ENCODE measurements at regions of chr9 and their contacts with region 1.

Region 1: GRCh38 chr9:124551472-124552272 is 44.5 kb upstream of the NR5A1 start:
- DNase-seq: peak; percentile 70 to 77
- H3K4me3 ChIP-seq: no peak overlapping the region
- H3K4me3 Mint-ChIP-seq: no peak overlapping the region
- H3K27ac Mint-ChIP-seq: no peak overlapping the region
- H3K4me1 ChIP-seq: peaks cover 9% of the 10 kb centered on the region; the same call in 1 of the 2 replicates
- H3K4me1 Mint-ChIP-seq: no peaks in the 10 kb centered on the region
- H3K27me3 ChIP-seq: no peaks in the 10 kb centered on the region
- H3K27me3 Mint-ChIP-seq: no peaks in the 10 kb centered on the region
- CTCF ChIP-seq: peak; percentile 69 to 78

Region 2: GRCh38 chr9:124054582-124055227 is 497.0 kb before region 1 on chr9:
- CTCF ChIA-PET with region 1: no interaction called
- POLR2A ChIA-PET with region 1: no interaction called
- intact Hi-C with region 1: no loop called
- DNase-seq: no peak
- H3K4me3 ChIP-seq: no peak overlapping the region
- H3K4me3 Mint-ChIP-seq: no peak overlapping the region
- H3K27ac Mint-ChIP-seq: no peak overlapping the region
- H3K4me1 ChIP-seq: no peaks in the 10 kb centered on the region
- H3K4me1 Mint-ChIP-seq: no peaks in the 10 kb centered on the region
- H3K27me3 ChIP-seq: no peaks in the 10 kb centered on the region
- H3K27me3 Mint-ChIP-seq: no peaks in the 10 kb centered on the region
- CTCF ChIP-seq: no peak

Region 3: DNA sequence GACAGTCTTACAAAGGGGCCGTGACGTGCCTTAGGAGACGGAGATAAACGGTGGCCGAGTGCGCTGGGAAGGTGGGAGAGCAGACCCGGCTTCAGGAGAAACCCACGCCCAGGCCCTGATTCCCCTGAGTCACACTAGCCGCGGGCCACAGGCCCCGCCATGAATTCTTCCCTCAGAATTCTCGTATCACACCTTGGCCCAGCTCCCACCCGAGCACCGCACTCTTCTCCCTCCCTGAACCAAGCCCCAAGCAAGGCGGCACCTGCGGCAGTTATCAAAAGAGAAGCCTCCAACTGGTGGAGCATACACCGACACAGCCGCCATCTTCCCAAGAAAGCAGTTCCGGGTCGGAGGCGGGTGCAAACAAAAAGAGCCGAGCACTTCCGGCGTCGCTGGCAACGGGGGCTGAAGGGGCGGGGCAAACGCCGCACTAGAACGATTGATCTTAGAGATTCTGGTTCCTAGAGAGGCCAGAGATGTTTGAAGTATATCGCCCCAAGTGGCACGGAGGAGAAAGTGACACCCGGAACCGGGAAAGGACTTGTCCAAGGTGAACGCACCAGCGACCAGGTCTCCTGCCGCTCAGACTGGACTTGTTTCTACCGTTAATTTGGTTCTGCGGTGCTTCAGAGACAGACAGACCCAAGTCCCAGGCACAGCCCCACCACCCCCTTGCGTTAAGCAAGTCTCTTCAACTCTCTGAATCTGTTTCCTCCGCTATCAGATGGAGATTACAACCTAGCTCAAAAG is 136.4 kb before region 1 on chr9 and contains the start of gene PSMB7:
- CTCF ChIA-PET with region 1: no interaction called
- POLR2A ChIA-PET with region 1: no interaction called
- intact Hi-C with region 1: no loop called
- DNase-seq: peak; percentile 96 to 97
- H3K4me3 ChIP-seq: peak within 1 kb of the TSS; percentile 84
- H3K4me3 Mint-ChIP-seq: peak within 1 kb of the TSS; percentile 91
- H3K27ac Mint-ChIP-seq: peak within 1 kb of the TSS; percentile 98
- H3K4me1 ChIP-seq: peaks cover 10% of the 10 kb centered on the region; the same call in 1 of the 2 replicates
- H3K4me1 Mint-ChIP-seq: peaks cover 11% of the 10 kb centered on the region
- H3K27me3 ChIP-seq: no peaks in the 10 kb centered on the region
- H3K27me3 Mint-ChIP-seq: no peaks in the 10 kb centered on the region
- CTCF ChIP-seq: peak; percentile 80 to 86
- total RNA-seq, gene PSMB7: 216 and 238 TPM in 2 replicates

Region 4: GRCh38 chr9:124658165-124659017 is 106.7 kb after region 1 on chr9:
- CTCF ChIA-PET with region 1: interaction called, 11 read pairs
- POLR2A ChIA-PET with region 1: no interaction called
- intact Hi-C with region 1: loop called (anchors 5 kb)
- DNase-seq: peak; percentile 76 to 85
- H3K4me3 ChIP-seq: peak overlapping the region; percentile 49
- H3K4me3 Mint-ChIP-seq: peak overlapping the region; percentile 98
- H3K27ac Mint-ChIP-seq: peak overlapping the region; percentile 100
- H3K4me1 ChIP-seq: peaks cover 37% of the 10 kb centered on the region
- H3K4me1 Mint-ChIP-seq: peaks cover 7% of the 10 kb centered on the region
- H3K27me3 ChIP-seq: no peaks in the 10 kb centered on the region
- H3K27me3 Mint-ChIP-seq: no peaks in the 10 kb centered on the region
- CTCF ChIP-seq: no peak

Region 5: DNA sequence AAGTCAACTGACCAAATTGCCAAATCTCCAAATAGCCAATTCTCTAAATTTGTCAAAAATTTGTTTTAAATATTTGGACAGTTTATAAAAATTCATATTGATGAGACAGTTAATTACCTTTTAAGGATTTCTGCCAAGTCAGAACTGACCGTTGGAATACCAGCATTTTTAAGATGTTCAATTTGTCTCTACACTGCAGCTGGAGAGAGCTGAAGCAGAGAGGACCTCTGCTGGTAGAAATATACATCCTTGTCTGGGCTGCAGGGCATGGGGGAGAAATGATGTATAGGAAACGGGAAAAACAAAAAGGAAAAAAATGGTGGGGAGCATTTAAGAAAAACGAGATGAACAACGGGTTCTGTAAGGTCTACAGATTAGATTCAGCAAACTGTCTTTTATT is 202.6 kb after region 1 on chr9:
- CTCF ChIA-PET with region 1: no interaction called
- POLR2A ChIA-PET with region 1: no interaction called
- intact Hi-C with region 1: loop called (anchors 5 kb)
- DNase-seq: peak in 1 of 2 experiments; percentile 38
- H3K4me3 ChIP-seq: no peak overlapping the region
- H3K4me3 Mint-ChIP-seq: no peak overlapping the region
- H3K27ac Mint-ChIP-seq: no peak overlapping the region
- H3K4me1 ChIP-seq: peaks cover 21% of the 10 kb centered on the region; the same call in 1 of the 2 replicates
- H3K4me1 Mint-ChIP-seq: peaks cover 41% of the 10 kb centered on the region
- H3K27me3 ChIP-seq: no peaks in the 10 kb centered on the region
- H3K27me3 Mint-ChIP-seq: no peaks in the 10 kb centered on the region
- CTCF ChIP-seq: peak; percentile 49 to 51

Measured in Caco-2 (cell line).